Activated B cell treated with CpG ODN at 0.5 μM for 24 hours (primary cell): ENCODE measurements at regions of chr16 and their contacts with region 1.

Region 1: DNA sequence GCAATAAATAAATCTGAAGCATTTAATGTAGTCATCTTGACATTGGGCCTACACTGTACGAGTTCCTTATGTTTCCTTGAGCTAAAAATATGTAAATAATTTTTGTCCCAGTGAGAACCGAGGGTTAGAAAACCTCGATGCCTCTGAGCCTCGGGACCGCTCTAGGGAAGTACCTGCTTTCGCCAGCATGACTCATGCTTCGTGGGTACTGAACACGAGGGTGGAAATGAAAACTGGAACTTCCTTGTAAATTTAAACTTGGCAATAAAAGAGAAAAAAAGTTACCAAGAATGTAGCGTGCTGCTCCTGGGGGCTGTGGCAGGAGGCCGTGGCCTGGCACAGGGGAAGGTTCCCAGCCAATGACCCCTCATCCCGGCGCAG is 74.1 kb downstream of the SOCS1 start:
- DNase-seq: no peak
- ATAC-seq: peak; percentile 35
- H3K4me3 Mint-ChIP-seq: peak overlapping the region; percentile 64
- H3K27ac Mint-ChIP-seq: peak overlapping the region; percentile 87
- H3K4me1 Mint-ChIP-seq: peaks cover 58% of the 10 kb centered on the region
- H3K27me3 Mint-ChIP-seq: no peaks in the 10 kb centered on the region
- CTCF ChIP-seq: no peak

Region 2: DNA sequence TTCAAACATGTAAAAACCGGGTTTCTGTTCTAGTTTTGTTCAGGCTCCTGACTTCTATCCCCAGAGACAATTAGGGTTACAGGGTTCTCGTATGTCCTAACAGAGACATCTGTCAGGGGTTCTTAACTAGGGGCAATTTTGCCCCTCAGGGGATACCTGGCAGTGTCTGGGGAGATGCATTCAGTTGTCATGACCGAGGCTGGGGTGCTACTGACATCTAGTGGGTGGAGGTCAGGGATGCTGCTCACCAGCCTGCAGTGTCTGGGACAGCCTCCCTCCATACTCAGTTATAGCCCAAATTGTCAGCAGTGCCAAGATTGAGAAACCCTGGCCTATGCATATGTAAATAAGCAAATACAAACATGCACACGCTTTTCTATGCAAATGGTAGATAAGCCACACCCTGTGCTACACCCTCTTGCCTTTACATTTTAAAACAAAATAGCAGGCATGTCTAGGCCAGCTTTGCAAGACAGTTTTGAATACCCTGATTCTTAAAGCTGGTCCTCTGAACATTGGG is 200.1 kb before region 1 on chr16:
- CTCF ChIA-PET with region 1: interaction called, 3 read pairs
- POLR2A ChIA-PET with region 1: interaction called, 15 read pairs
- intact Hi-C with region 1: loop called (anchors 1 kb)
- DNase-seq: peak; percentile 64
- ATAC-seq: peak; percentile 88
- H3K4me3 Mint-ChIP-seq: peak overlapping the region; percentile 69
- H3K27ac Mint-ChIP-seq: peak overlapping the region; percentile 84
- H3K4me1 Mint-ChIP-seq: peaks cover 49% of the 10 kb centered on the region
- H3K27me3 Mint-ChIP-seq: no peaks in the 10 kb centered on the region
- CTCF ChIP-seq: no peak

Region 3: DNA sequence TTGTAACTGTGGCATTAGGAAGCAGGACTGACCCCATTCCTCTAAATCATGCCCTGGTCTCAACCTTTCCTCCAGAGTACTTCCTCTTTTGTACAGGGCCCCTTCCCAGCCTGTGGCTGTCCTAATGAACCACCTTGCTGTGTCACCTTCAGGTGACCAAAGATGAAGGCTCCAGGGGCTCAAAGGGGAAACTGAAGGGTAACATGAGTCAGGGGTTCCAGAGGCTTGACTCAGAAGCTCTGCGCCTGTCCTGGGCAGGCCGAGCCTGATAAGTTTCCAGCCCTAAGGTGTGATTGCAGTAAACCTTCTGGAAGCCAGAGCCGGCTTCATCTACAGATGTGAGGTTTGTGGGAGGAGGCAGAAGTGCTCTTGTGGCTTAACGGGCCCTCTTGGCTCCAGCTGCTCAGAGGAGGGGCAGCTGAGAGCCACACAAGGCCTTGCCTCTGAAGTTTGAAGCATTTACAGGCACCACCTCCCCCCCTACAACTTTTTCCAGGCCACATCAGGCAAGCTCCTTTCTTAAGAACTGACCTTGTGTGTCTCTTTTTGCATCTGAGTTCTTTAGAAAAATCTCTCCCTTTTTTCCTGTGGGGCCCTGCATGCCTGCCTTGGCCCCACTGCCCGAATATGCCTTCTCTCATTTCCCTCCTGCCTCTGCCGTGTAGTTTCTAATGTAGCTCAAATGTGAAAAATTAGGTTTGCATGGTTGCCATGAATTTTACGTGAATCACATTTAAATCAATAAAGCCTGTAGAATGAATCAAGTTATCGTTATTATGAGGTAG is 87.6 kb before region 1 on chr16:
- CTCF ChIA-PET with region 1: no interaction called
- POLR2A ChIA-PET with region 1: interaction called, 4 read pairs
- intact Hi-C with region 1: loop called (anchors 2 kb)
- DNase-seq: no peak
- ATAC-seq: peak; percentile 67
- H3K4me3 Mint-ChIP-seq: peak overlapping the region; percentile 68
- H3K27ac Mint-ChIP-seq: peak overlapping the region; percentile 94
- H3K4me1 Mint-ChIP-seq: peaks cover 40% of the 10 kb centered on the region
- H3K27me3 Mint-ChIP-seq: no peaks in the 10 kb centered on the region
- CTCF ChIP-seq: no peak

Region 4: GRCh38 chr16:11201498-11202259 is 19.8 kb after region 1 on chr16:
- CTCF ChIA-PET with region 1: interaction called, 3 read pairs
- POLR2A ChIA-PET with region 1: interaction called, 25 read pairs
- intact Hi-C with region 1: loop called (anchors 1 kb)
- DNase-seq: no peak
- ATAC-seq: no peak
- H3K4me3 Mint-ChIP-seq: no peak overlapping the region
- H3K27ac Mint-ChIP-seq: peak overlapping the region; percentile 26
- H3K4me1 Mint-ChIP-seq: peaks cover 52% of the 10 kb centered on the region
- H3K27me3 Mint-ChIP-seq: peaks cover 7% of the 10 kb centered on the region
- CTCF ChIP-seq: no peak